PC-9 (cell line): ENCODE measurements at regions of chr13 and their contacts with region 1.

Region 1: GRCh38 chr13:99144306-99144705 is 56.3 kb upstream of the UBAC2 start:
- DNase-seq: no peak
- H3K4me3 ChIP-seq: no peak overlapping the region
- H3K27ac ChIP-seq: no peak overlapping the region
- H3K4me1 ChIP-seq: no peaks in the 10 kb centered on the region
- H3K27me3 ChIP-seq: no peaks in the 10 kb centered on the region
- CTCF ChIP-seq: no peak

Region 2: DNA sequence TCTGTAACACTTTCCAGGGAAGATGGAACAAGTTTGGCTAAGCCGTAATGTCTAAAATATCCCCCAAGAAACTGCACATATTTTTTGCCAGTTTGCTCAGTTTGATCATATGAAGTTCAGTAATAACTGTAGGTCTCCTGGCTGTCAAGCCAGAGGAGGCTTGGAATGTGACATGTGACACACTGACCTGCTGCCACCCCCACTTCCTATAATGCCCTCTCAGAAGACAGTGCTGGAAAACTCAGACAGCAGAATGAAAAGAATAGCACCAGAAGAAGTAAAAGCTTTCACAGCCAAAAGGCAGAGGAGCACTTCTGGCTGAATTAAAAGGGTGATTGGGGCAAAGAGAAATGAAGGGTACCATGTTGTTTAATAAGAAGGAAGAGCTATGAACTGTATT is 11.1 kb before region 1 on chr13:
- CTCF ChIA-PET with region 1: no interaction called
- POLR2A ChIA-PET with region 1: interaction called, 10 read pairs
- intact Hi-C with region 1: no loop called
- DNase-seq: peak in 1 of 2 experiments; percentile 3
- H3K4me3 ChIP-seq: no peak overlapping the region
- H3K27ac ChIP-seq: no peak overlapping the region
- H3K4me1 ChIP-seq: peaks cover 12% of the 10 kb centered on the region
- H3K27me3 ChIP-seq: no peaks in the 10 kb centered on the region
- CTCF ChIP-seq: no peak

Region 3: DNA sequence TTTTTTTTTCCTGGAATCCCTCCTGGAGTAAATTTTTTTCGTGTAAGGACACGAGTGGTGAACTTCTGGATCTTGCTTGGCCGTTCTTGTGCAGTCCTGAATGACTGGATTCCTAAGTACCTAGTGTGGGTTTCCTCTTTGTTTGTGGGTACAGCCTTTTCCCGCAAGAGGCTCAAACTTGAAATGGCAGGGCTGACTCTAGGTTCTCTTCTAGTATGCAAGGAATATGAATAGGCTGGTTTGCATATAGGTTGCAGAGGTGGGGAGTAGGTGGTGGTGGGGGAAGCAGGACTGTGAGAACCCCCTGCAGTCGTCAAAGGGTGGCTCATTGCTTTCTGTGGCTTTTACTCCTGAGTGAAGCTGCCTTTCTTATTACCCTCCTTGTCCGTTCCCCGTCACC is 69.9 kb after region 1 on chr13:
- CTCF ChIA-PET with region 1: no interaction called
- POLR2A ChIA-PET with region 1: interaction called, 12 read pairs
- intact Hi-C with region 1: no loop called
- DNase-seq: peak; percentile 2 to 5
- H3K4me3 ChIP-seq: no peak overlapping the region
- H3K27ac ChIP-seq: no peak overlapping the region
- H3K4me1 ChIP-seq: no peaks in the 10 kb centered on the region
- H3K27me3 ChIP-seq: no peaks in the 10 kb centered on the region
- CTCF ChIP-seq: no peak